OCI-LY7 (cell line): ENCODE measurements at regions of chr3 and their contacts with region 1.

Region 1: GRCh38 chr3:9792405-9793160 is at the starts of genes ARPC4 and TADA3:
- DNase-seq: peak; percentile 98
- H3K4me3 ChIP-seq: peak within 1 kb of the TSS; percentile 96
- H3K27ac ChIP-seq: peak within 1 kb of the TSS; percentile 72
- H3K4me1 ChIP-seq: peaks cover 47% of the 10 kb centered on the region
- CTCF ChIP-seq: no peak
- total RNA-seq, gene ARPC4: 89.8 and 99.5 TPM in 2 replicates
- total RNA-seq, gene TADA3: 51.6 and 62.0 TPM in 2 replicates

Region 2: DNA sequence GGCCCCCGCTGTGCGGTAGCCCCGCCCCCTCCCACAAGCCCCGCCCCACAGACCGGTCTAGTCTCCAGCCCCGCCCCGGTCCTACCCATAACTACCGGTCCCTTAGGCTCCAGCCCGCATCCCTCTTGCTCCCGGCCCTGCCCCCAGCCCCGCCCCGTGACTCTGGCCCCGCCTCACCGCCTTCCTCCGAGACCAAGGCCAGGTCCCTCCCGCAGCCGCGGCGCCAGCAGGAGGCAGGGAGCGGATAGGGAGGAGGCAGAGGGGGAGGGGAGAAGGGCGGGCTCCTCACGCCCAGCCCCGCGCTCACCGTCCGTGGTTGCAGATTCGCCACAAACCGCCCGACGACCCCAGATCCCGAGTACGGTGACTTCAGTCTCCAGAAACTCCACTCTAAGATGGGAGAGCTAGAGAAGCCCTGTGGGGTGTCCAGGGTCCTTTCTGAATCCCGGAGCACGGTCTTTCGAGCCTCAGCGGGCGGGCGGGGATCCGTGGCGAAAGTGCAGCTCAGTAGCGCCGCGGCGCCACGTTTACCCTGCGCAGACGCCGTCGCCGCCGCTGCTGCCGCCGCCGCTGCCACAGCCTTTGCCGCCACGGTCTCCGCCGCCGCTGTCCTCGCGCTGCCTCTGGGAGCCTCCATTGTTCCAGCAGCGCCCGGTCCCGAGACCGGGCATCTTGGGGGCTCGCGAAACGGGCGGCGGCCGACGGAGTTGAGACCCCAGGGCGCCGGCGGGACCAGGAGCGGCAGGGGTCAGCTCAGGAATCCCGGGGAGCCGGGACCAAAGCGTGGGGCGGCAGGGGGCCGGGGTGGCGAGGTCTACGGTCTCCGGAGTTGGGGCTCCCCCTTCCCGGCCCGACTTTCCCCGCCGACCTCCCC is 61.1 kb before region 1 on chr3 and contains the start of gene BRPF1:
- CTCF ChIA-PET with region 1: no interaction called
- POLR2A ChIA-PET with region 1: interaction called, 3 read pairs
- intact Hi-C with region 1: loop called (anchors 2 kb)
- DNase-seq: peak; percentile 98
- H3K4me3 ChIP-seq: peak within 1 kb of the TSS; percentile 96
- H3K27ac ChIP-seq: peak within 1 kb of the TSS; percentile 60
- H3K4me1 ChIP-seq: peaks cover 28% of the 10 kb centered on the region
- CTCF ChIP-seq: no peak
- total RNA-seq, gene BRPF1: 29.2 and 31.9 TPM in 2 replicates

Region 3: GRCh38 chr3:9779721-9780457 is 12.7 kb before region 1 on chr3:
- CTCF ChIA-PET with region 1: interaction called, 5 read pairs
- POLR2A ChIA-PET with region 1: interaction called, 10 read pairs
- intact Hi-C with region 1: no loop called
- DNase-seq: peak; percentile 81
- H3K4me3 ChIP-seq: peak overlapping the region; percentile 33
- H3K27ac ChIP-seq: peak overlapping the region; percentile 84
- H3K4me1 ChIP-seq: peaks cover 52% of the 10 kb centered on the region
- CTCF ChIP-seq: no peak

Region 4: GRCh38 chr3:9803494-9803893 is 10.9 kb after region 1 on chr3:
- CTCF ChIA-PET with region 1: interaction called, 5 read pairs
- POLR2A ChIA-PET with region 1: interaction called, 10 read pairs
- intact Hi-C with region 1: no loop called
- DNase-seq: no peak
- H3K4me3 ChIP-seq: no peak overlapping the region
- H3K27ac ChIP-seq: no peak overlapping the region
- H3K4me1 ChIP-seq: peaks cover 3% of the 10 kb centered on the region
- CTCF ChIP-seq: no peak